Activated CD4-positive, alpha-beta memory T cell treated with anti-CD3 and anti-CD28 coated beads for 36 hours (primary cell): ENCODE measurements at regions of chr4 and their contacts with region 1.

Region 1: GRCh38 chr4:108030332-108030731 is 40.6 kb downstream of the HADH start:
- DNase-seq: peak; percentile 86
- H3K4me3 Mint-ChIP-seq: no peak overlapping the region
- H3K27ac Mint-ChIP-seq: peak overlapping the region; percentile 82
- H3K4me1 Mint-ChIP-seq: peaks cover 50% of the 10 kb centered on the region
- H3K27me3 Mint-ChIP-seq: no peaks in the 10 kb centered on the region

Region 2: GRCh38 chr4:108045694-108046038 is 15.3 kb after region 1 on chr4:
- CTCF ChIA-PET with region 1: interaction called, 10 read pairs
- POLR2A ChIA-PET with region 1: interaction called, 4 read pairs
- intact Hi-C with region 1: no loop called
- DNase-seq: peak; percentile 51
- H3K4me3 Mint-ChIP-seq: no peak overlapping the region
- H3K27ac Mint-ChIP-seq: peak overlapping the region; percentile 77
- H3K4me1 Mint-ChIP-seq: peaks cover 52% of the 10 kb centered on the region
- H3K27me3 Mint-ChIP-seq: no peaks in the 10 kb centered on the region

Region 3: GRCh38 chr4:108097990-108098553 is 67.7 kb after region 1 on chr4:
- CTCF ChIA-PET with region 1: interaction called, 4 read pairs
- POLR2A ChIA-PET with region 1: no interaction called
- intact Hi-C with region 1: loop called (anchors 1 kb)
- DNase-seq: no peak
- H3K4me3 Mint-ChIP-seq: no peak overlapping the region
- H3K27ac Mint-ChIP-seq: peak overlapping the region; percentile 70
- H3K4me1 Mint-ChIP-seq: peaks cover 93% of the 10 kb centered on the region
- H3K27me3 Mint-ChIP-seq: no peaks in the 10 kb centered on the region

Region 4: DNA sequence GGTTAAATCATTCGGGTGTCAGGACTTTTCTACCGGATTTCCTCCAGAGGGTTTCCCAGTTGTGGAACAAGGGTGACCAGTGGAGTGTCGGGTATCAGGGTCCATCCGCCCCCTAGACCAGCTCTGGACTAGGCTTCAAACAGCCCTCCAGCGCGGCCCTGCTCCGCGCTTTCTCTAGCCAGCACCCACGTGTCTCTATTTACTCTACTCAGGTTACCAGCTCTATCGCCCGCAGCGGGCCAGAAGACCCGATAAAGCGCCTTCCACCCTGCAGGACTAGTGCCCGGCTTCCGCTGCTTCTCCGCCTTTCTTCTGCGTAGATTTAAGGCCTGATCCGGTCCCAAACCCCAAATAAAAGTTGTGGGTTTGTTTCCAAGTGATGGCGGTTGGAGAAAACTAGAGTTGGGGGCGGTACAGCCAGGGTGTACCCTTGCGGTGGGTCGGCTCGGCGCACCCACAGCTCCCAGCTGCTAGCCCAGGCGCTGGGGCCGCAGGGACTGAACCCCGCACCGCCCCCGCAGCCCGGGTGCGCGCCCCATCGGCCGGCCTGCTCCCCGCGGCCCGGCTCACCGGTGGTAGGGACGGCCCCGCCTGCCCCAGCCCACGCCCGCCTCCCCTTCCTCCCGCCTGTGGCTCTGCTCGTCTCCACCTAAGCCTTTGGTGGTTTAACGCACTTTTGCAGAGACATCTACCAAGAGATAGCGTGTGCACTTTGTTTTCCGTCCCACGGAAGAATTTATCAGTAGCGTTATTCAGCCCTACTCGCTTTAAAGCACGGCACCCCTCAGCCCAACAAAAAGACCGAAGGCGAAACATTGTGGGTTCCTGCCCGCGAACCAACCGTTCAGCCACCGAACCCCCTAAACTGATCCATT is 136.3 kb after region 1 on chr4:
- CTCF ChIA-PET with region 1: interaction called, 19 read pairs
- POLR2A ChIA-PET with region 1: interaction called, 16 read pairs
- intact Hi-C with region 1: loop called (anchors 1 kb)
- DNase-seq: peak; percentile 81
- H3K4me3 Mint-ChIP-seq: peak overlapping the region; percentile 85
- H3K27ac Mint-ChIP-seq: peak overlapping the region; percentile 94
- H3K4me1 Mint-ChIP-seq: peaks cover 46% of the 10 kb centered on the region
- H3K27me3 Mint-ChIP-seq: peaks cover 9% of the 10 kb centered on the region

Region 5: DNA sequence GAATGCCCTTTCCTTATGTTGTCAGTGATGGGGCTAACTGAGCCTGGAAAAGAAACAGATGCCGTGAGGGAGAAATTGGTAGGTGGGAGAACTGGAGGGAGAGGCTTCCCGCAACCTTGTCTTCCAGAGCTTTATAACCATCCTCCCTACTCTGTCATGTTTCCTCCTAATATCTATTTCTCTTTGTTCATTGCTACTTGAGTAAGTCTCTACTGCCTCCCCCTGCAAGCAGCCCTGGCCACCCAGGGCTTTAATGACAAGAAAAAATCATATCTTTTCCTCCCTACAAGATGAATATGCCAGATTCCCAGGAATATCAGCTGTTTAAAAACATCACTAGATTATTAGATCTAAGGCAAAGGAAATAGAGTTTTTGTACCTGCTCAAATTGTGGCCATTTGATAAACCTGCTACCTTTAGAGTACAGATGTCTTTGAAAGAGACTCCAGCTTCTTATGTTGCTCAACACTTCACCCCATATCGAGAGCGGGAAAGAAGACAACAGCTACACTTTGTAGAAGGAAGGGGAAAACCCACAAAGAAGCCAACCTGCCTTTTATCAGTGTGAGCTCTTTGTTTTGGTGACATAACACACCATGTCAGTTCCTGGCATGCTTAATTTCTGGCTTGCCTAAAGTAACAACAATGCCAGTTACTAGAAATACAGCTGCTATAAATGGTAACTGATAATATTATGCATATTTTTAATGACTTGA is 325.0 kb after region 1 on chr4:
- CTCF ChIA-PET with region 1: interaction called, 3 read pairs
- POLR2A ChIA-PET with region 1: interaction called, 4 read pairs
- intact Hi-C with region 1: loop called (anchors 2 kb)
- DNase-seq: peak; percentile 24
- H3K4me3 Mint-ChIP-seq: no peak overlapping the region
- H3K27ac Mint-ChIP-seq: peak overlapping the region; percentile 55
- H3K4me1 Mint-ChIP-seq: peaks cover 52% of the 10 kb centered on the region
- H3K27me3 Mint-ChIP-seq: no peaks in the 10 kb centered on the region

Region 6: DNA sequence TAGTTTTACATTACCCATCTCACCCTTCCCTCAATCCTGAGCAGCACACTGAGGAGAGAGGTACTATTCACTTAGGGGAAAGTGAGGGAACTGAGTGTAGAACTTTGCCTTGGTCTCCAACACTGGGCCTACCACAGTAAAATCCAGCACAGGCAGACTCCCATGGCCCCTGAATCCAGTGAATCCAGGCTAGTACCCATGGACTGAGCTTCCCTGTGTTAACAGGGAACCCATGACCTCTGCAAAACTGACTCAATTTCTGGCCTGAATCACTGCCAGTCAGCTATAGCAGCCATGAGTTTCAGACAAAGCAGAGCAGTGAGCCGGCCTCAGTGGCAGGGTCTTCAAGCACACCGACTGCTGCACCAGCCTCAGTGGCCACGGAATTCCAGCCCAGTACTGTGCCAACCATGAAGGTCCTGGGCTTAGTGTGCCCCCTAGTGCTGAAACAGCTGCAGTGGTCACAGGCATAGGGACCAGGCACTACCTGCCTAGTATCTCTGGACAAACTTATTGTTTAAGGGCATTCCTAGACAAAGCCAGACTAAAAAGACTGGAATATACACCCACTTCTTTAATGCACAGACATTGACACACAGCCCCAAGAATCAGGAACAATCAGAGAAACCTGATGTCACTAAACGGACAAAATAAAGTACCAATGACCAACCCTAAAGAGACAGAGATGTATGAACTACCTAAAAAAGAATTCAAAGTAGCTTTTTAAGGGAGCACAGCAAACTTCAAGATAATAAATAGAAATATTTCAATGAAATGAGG is 462.7 kb after region 1 on chr4:
- CTCF ChIA-PET with region 1: interaction called, 33 read pairs
- POLR2A ChIA-PET with region 1: no interaction called
- intact Hi-C with region 1: no loop called
- DNase-seq: peak; percentile 53
- H3K4me3 Mint-ChIP-seq: no peak overlapping the region
- H3K27ac Mint-ChIP-seq: no peak overlapping the region
- H3K4me1 Mint-ChIP-seq: no peaks in the 10 kb centered on the region
- H3K27me3 Mint-ChIP-seq: no peaks in the 10 kb centered on the region